ENCODE measurements at regions of chr21 and their contacts with region 1.

Region 1: DNA sequence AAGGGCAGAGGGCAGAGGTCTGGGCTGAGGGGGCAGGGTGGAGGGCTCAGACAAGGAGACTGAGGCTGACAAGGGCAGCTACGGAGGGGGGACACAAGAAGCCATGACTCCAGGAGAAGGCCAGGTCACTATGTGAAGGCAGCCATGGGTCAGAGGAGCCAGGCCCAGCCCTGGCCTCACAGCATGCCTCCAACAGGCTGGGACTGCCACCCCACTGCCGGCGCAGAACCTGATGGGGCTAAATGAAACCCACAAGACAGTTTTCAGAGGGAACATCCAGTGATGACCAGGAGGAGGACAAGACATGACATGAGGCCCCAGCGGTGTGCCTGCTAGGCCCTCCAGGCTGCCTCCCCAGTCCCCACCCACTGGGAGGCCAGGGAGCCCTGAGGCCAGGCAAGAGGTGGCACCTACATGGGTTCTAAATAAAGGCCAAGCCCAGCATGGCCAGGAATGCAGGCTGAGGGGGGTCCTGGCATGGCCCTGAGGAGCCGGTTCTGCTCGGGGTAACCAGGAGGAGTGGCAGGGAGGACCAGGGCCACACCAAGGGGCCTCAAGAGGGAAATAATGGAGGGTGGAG is 27.3 kb upstream of the LSS start:
- DNase-seq: no peak
- H3K4me3 ChIP-seq: no peak overlapping the region
- H3K27ac ChIP-seq: no peak overlapping the region
- H3K4me1 ChIP-seq: no peaks in the 10 kb centered on the region
- H3K27me3 ChIP-seq: no peaks in the 10 kb centered on the region
- CTCF ChIP-seq: no peak

Region 2: DNA sequence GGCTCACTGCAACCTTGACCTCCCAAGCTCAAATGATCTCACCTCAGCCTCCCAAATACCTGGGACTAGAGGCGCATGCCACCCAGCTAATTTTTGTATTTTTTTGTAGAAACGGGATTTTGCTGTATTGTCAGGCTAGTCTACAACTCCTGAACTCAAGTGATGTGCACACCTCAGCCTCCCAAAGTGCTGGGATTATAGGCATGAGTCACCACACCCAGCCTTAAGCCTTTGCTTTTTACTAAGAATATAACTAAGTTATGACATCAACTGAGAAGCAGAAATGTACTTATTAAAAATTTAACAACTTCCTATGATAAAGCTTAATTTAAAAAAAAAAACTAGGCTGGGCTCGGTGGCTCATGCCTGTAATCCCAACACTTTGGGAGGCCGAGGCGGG is 18.4 kb before region 1 on chr21:
- CTCF ChIA-PET with region 1: interaction called, 10 read pairs
- POLR2A ChIA-PET with region 1: no interaction called
- intact Hi-C with region 1: no loop called
- DNase-seq: no peak
- H3K4me3 ChIP-seq: no peak overlapping the region
- H3K27ac ChIP-seq: no peak overlapping the region
- H3K4me1 ChIP-seq: no peaks in the 10 kb centered on the region
- H3K27me3 ChIP-seq: no peaks in the 10 kb centered on the region
- CTCF ChIP-seq: no peak

Measured in A673 (cell line).